Endothelial cell of umbilical vein (primary cell): ENCODE measurements at regions of chr17 and their contacts with region 1.

Region 1: GRCh38 chr17:70034158-70034557 is 40.9 kb upstream of the KCNJ16 start:
- DNase-seq: peak; percentile 98
- H3K4me3 ChIP-seq: no peak overlapping the region
- H3K27ac ChIP-seq: peak overlapping the region; percentile 90
- H3K4me1 ChIP-seq: peaks cover 17% of the 10 kb centered on the region
- H3K27me3 ChIP-seq: no peaks in the 10 kb centered on the region
- CTCF ChIP-seq: no peak
- POLR2A ChIP-seq: peak; percentile 68

Region 2: GRCh38 chr17:69597898-69598692 is 436.1 kb before region 1 on chr17:
- CTCF ChIA-PET with region 1: no interaction called
- POLR2A ChIA-PET with region 1: no interaction called
- dilution Hi-C with region 1: no loop called
- intact Hi-C with region 1: loop called (anchors 2 kb)
- DNase-seq: peak; percentile 82
- H3K4me3 ChIP-seq: peak overlapping the region in 1 of 3 experiments; percentile 13
- H3K27ac ChIP-seq: peak overlapping the region; percentile 50
- H3K4me1 ChIP-seq: peaks cover 37% of the 10 kb centered on the region
- H3K27me3 ChIP-seq: no peaks in the 10 kb centered on the region
- CTCF ChIP-seq: no peak
- POLR2A ChIP-seq: no peak

Region 3: GRCh38 chr17:69761751-69762321 is 272.3 kb before region 1 on chr17:
- CTCF ChIA-PET with region 1: no interaction called
- POLR2A ChIA-PET with region 1: no interaction called
- dilution Hi-C with region 1: no loop called
- intact Hi-C with region 1: loop called (anchors 2 kb)
- DNase-seq: peak; percentile 86
- H3K4me3 ChIP-seq: no peak overlapping the region
- H3K27ac ChIP-seq: peak overlapping the region; percentile 91
- H3K4me1 ChIP-seq: peaks cover 21% of the 10 kb centered on the region
- H3K27me3 ChIP-seq: no peaks in the 10 kb centered on the region
- CTCF ChIP-seq: no peak
- POLR2A ChIP-seq: no peak

Region 4: DNA sequence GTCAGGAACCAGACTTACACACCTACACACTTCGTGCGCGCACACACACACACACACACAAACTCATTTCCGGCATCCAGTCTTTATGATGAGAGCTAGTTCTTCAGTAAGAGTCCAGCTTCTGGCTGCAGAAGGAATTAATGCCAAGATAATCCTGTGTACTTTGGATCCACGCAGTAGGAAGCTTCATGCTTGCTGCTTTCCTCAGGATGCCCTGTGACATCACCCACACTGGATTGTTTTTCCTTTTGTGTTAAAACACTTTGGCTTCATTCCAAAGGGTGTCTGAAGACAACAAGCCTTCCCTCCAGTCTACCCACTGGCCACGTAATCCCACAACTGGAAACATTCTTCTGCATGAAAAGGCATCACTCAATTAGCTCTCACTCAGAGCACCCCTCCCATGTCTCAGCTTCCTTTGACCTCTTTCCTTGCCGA is 76.3 kb after region 1 on chr17:
- CTCF ChIA-PET with region 1: no interaction called
- POLR2A ChIA-PET with region 1: no interaction called
- dilution Hi-C with region 1: no loop called
- intact Hi-C with region 1: loop called (anchors 1 kb)
- DNase-seq: peak; percentile 99
- H3K4me3 ChIP-seq: no peak overlapping the region
- H3K27ac ChIP-seq: peak overlapping the region; percentile 82
- H3K4me1 ChIP-seq: peaks cover 27% of the 10 kb centered on the region
- H3K27me3 ChIP-seq: no peaks in the 10 kb centered on the region
- CTCF ChIP-seq: no peak
- POLR2A ChIP-seq: peak; percentile 42

Region 5: DNA sequence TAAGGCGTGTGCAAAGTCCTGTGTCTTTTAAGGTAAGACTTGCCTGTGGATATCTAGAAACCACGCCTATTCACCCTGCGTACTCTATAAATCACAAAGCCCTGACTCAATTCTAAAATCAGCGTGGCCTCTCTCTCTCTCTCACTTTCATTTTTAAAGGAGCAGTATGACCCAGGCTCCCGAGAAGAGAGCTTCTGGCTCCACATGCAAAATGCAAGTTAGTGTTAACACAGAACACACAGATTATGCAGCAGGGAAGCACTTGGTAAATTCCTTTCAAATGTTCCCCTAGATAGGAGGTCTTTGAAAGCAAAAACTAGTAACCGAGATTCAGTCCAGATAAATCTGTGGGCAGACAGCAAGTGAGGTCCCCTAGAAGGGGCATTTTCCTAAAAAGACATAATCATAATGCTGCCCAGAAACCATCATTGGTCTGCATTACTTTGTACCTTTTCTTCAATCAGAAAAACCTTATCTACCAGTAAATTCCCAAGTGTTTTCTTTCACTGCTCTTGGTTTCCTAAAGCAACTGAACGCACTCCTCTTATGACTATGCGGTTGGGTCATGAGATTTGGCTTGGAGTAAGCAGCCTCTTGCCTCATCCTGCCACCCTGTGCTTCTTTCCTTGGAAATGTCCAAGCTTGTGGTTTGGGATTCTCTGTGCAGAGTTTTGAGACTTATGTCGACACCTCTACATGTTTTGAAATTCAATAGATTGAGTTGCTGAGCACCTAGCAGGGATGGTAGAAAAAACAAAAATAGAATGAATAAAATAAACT is 103.5 kb after region 1 on chr17:
- CTCF ChIA-PET with region 1: no interaction called
- POLR2A ChIA-PET with region 1: no interaction called
- dilution Hi-C with region 1: no loop called
- intact Hi-C with region 1: loop called (anchors 1 kb)
- DNase-seq: peak; percentile 80
- H3K4me3 ChIP-seq: peak overlapping the region in 2 of 3 experiments; percentile 47 to 70
- H3K27ac ChIP-seq: peak overlapping the region; percentile 43
- H3K4me1 ChIP-seq: peaks cover 14% of the 10 kb centered on the region
- H3K27me3 ChIP-seq: no peaks in the 10 kb centered on the region
- CTCF ChIP-seq: no peak
- POLR2A ChIP-seq: no peak

Region 6: DNA sequence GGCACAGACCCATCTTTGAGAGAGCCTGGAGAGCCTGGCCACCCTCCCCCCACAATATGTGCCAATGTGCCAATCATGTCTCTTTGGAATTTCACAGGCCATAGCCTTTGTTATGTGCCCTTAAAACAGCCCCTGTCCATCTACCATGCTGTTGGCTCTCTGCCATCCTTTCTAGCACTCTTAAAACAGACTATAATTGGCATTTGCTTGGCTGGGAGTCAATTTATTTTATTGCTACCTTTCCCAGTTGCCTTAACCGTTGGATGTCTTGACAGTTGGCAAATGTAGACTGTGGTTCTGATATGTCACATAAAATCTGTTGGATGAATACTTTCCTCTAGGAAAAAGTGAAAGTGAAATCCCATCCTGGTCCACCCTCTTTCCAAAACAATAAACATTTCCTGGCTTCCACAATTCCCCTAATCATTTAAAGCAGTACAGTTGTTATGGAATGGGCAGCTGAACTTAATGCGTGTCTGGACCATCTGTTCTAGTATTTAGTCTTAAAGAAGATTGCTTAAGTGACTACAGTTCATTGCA is 529.2 kb after region 1 on chr17:
- CTCF ChIA-PET with region 1: no interaction called
- POLR2A ChIA-PET with region 1: no interaction called
- dilution Hi-C with region 1: no loop called
- intact Hi-C with region 1: loop called (anchors 5 kb)
- DNase-seq: peak; percentile 92
- H3K4me3 ChIP-seq: peak overlapping the region in 1 of 3 experiments; percentile 30
- H3K27ac ChIP-seq: peak overlapping the region; percentile 25
- H3K4me1 ChIP-seq: peaks cover 31% of the 10 kb centered on the region
- H3K27me3 ChIP-seq: no peaks in the 10 kb centered on the region
- CTCF ChIP-seq: no peak
- POLR2A ChIP-seq: no peak